IMR-90 (cell line): ENCODE measurements at regions of chr2 and their contacts with region 1.

Region 1: GRCh38 chr2:202375609-202376408 is at the start of gene BMPR2:
- DNase-seq: peak; percentile 81
- ATAC-seq: peak; percentile 80
- H3K4me3 ChIP-seq: peak within 1 kb of the TSS; percentile 100
- H3K27ac ChIP-seq: peak within 1 kb of the TSS; percentile 95
- H3K4me1 ChIP-seq: no peaks in the 10 kb centered on the region
- H3K27me3 ChIP-seq: no peaks in the 10 kb centered on the region
- CTCF ChIP-seq: no peak
- POLR2A ChIP-seq: peak; percentile 94
- RAD21 ChIP-seq: no peak
- total RNA-seq, gene BMPR2: 30.1 and 34.7 TPM in 2 replicates

Region 2: GRCh38 chr2:202033321-202034248 is 342.2 kb before region 1 on chr2 and contains the start of gene FZD7:
- CTCF ChIA-PET with region 1: no interaction called
- POLR2A ChIA-PET with region 1: no interaction called
- dilution Hi-C with region 1: no loop called
- in situ Hi-C with region 1: no loop called
- intact Hi-C with region 1: loop called (anchors 10 kb)
- DNase-seq: peak; percentile 92
- ATAC-seq: peak; percentile 73
- H3K4me3 ChIP-seq: peak within 1 kb of the TSS; percentile 94
- H3K27ac ChIP-seq: peak within 1 kb of the TSS; percentile 98
- H3K4me1 ChIP-seq: peaks cover 6% of the 10 kb centered on the region
- H3K27me3 ChIP-seq: no peaks in the 10 kb centered on the region
- CTCF ChIP-seq: 0 out of 2 replicates have a peak, but pooled peaks have one; percentile 0
- POLR2A ChIP-seq: peak; percentile 73
- RAD21 ChIP-seq: peak; percentile 24
- total RNA-seq, gene FZD7: 62.4 and 81.1 TPM in 2 replicates

Region 3: GRCh38 chr2:202290970-202291369 is 84.8 kb before region 1 on chr2:
- CTCF ChIA-PET with region 1: no interaction called
- POLR2A ChIA-PET with region 1: no interaction called
- dilution Hi-C with region 1: no loop called
- in situ Hi-C with region 1: no loop called
- intact Hi-C with region 1: loop called (anchors 5 kb)
- DNase-seq: peak; percentile 64
- ATAC-seq: no peak
- H3K4me3 ChIP-seq: no peak overlapping the region
- H3K27ac ChIP-seq: peak overlapping the region; percentile 42; the same call in 1 of the 2 replicates
- H3K4me1 ChIP-seq: peaks cover 7% of the 10 kb centered on the region
- H3K27me3 ChIP-seq: no peaks in the 10 kb centered on the region
- CTCF ChIP-seq: no peak
- POLR2A ChIP-seq: no peak
- RAD21 ChIP-seq: no peak

Region 4: DNA sequence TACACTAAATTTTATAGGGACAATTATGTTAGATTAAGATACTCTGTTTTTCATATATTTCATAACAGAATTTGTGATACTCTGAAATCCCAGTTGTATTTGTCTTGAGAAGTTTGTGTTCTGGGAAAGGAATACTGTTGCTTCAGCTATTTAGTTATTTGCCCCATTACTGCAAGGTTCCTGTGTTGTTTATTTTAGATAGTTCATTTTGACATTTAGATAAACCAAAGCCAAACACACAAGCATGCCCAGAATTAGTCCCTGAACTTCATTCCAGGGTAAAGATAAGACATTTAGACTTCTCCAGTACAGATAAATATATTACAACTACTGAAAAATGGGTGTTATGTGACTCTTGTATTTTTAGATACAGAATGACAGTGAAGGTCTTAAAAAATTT is 75.0 kb after region 1 on chr2:
- CTCF ChIA-PET with region 1: no interaction called
- POLR2A ChIA-PET with region 1: no interaction called
- dilution Hi-C with region 1: no loop called
- in situ Hi-C with region 1: no loop called
- intact Hi-C with region 1: loop called (anchors 5 kb)
- DNase-seq: peak; percentile 59
- ATAC-seq: peak; percentile 81
- H3K4me3 ChIP-seq: no peak overlapping the region
- H3K27ac ChIP-seq: no peak overlapping the region
- H3K4me1 ChIP-seq: peaks cover 7% of the 10 kb centered on the region
- H3K27me3 ChIP-seq: no peaks in the 10 kb centered on the region
- CTCF ChIP-seq: no peak
- POLR2A ChIP-seq: no peak
- RAD21 ChIP-seq: no peak

Region 5: GRCh38 chr2:202508686-202509085 is 132.9 kb after region 1 on chr2:
- CTCF ChIA-PET with region 1: no interaction called
- POLR2A ChIA-PET with region 1: no interaction called
- dilution Hi-C with region 1: no loop called
- in situ Hi-C with region 1: no loop called
- intact Hi-C with region 1: loop called (anchors 5 kb)
- DNase-seq: peak; percentile 26
- ATAC-seq: peak; percentile 53
- H3K4me3 ChIP-seq: no peak overlapping the region
- H3K27ac ChIP-seq: no peak overlapping the region
- H3K4me1 ChIP-seq: peaks cover 2% of the 10 kb centered on the region; the same call in 1 of the 2 replicates
- H3K27me3 ChIP-seq: no peaks in the 10 kb centered on the region
- CTCF ChIP-seq: no peak
- POLR2A ChIP-seq: no peak
- RAD21 ChIP-seq: no peak